HAP-1 (cell line): ENCODE measurements at regions of chr9 and their contacts with region 1.

Region 1: DNA sequence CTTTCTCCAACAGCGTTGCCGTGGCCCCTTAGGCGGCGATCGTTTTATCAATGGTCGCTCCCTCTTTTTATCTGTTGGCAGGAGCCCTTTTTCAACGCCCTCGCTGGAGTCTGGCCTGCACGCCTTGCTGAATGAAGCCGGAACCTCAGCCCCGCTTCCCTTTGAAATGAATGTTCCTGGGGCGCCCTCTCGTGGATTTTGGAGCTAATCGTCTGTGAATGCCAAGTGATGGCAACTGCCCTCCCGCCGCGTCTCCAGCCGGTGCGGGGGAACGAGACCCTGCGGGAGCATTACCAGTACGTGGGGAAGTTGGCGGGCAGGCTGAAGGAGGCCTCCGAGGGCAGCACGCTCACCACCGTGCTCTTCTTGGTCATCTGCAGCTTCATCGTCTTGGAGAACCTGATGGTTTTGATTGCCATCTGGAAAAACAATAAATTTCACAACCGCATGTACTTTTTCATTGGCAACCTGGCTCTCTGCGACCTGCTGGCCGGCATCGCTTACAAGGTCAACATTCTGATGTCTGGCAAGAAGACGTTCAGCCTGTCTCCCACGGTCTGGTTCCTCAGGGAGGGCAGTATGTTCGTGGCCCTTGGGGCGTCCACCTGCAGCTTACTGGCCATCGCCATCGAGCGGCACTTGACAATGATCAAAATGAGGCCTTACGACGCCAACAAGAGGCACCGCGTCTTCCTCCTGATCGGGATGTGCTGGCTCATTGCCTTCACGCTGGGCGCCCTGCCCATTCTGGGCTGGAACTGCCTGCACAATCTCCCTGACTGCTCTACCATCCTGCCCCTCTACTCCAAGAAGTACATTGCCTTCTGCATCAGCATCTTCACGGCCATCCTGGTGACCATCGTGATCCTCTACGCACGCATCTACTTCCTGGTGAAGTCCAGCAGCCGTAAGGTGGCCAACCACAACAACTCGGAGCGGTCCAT is 10.0 kb downstream of the S1PR3 start:
- DNase-seq: peak; percentile 68 to 91
- H3K4me3 ChIP-seq: no peak overlapping the region
- H3K4me1 ChIP-seq: no peaks in the 10 kb centered on the region
- H3K27me3 ChIP-seq: peaks cover 7% of the 10 kb centered on the region; the same call in 1 of the 2 replicates

Region 2: DNA sequence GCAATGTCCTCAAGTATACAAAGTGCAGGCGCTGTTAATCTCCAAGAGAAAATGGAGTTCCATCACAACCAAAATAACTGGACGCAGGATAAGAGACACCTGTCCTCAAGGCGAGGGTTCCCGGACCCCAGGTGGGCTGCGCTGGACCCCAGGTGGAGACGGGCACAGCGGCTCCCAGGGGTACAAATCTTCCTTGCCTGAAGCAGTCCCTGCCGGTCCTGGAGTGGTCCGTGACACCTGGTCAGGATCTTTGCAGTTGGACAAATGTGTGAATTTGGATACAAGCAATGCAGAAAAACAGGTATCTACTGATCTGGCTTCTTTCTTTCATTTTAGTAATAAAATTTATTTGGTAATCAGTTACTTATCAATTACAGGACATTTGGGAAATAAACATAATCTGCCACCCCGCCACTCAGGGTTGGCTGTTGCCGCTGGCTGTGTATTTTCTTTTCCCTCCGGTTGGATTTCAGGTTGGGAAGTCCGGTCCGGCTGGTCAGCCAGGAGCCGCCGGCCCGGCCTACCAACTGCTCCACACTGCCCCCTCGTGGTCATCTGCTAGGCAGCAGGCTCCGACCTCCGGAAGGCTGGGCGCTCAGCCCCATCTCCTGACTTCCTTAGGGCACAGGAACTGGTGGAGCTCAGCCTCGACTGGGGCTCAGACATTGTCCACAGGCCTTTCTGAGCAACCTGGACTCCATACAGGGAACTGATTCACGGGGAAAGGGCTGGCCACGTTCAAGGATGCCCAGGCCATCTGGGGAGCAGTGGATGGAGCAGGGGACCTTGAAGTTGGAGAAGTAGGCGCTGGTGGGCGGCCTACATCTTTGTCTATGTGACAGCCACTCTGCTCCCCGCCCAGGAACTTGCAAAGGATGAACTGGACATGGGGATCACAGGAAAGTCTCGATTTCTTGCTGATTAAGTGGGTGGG is 422.9 kb before region 1 on chr9:
- in situ Hi-C with region 1: loop called (anchors 25 kb)
- DNase-seq: peak; percentile 41 to 86
- H3K4me3 ChIP-seq: no peak overlapping the region
- H3K4me1 ChIP-seq: no peaks in the 10 kb centered on the region
- H3K27me3 ChIP-seq: no peaks in the 10 kb centered on the region